Activated naive CD8-positive, alpha-beta T cell treated with anti-CD3 and anti-CD28 coated beads, Interleukin-2, amount 10 ng/mL, durations not matched to agents 7 days and 5 days (primary cell): ENCODE measurements at regions of chr11 and their contacts with region 1.

Region 1: GRCh38 chr11:64996710-64997380 is at the start of gene BATF2:
- DNase-seq: peak; percentile 43
- ATAC-seq: peak; percentile 72
- H3K4me3 Mint-ChIP-seq: peak within 1 kb of the TSS; percentile 79
- H3K27ac Mint-ChIP-seq: peak within 1 kb of the TSS; percentile 85
- H3K4me1 Mint-ChIP-seq: peaks cover 29% of the 10 kb centered on the region
- H3K27me3 Mint-ChIP-seq: no peaks in the 10 kb centered on the region
- total RNA-seq, gene BATF2: 1.2 TPM

Region 2: DNA sequence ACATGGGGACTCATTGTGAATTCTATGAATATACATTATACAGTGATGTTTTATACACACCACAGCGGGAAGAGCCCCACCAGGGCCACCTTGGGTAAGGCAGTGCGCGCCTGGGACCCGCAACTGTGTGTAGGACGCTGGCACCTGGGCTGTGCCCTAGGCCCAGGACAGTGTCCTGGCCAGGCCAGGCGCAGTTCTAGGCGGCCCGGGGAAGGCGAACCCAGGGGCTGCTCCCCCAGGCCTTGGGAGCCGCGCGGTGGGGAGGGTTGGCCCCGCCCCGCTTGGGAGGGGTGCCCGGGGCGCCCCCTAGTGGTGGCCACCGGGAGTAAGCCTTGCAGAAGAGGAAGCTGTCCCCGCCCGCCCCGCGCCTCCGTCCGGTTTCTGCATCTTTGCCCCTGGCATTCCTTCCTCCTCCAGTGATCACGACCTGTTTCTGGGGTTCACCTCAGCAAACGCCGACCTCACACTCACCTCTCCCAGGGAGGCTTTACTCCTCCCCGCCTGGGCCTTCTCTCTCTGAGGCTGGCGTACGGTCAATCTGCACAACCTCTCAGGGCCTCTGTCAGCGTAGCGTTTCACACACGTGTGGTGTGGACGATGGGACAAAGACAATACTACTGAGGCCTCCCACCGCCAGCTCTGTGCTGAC is 109.0 kb before region 1 on chr11:
- POLR2A ChIA-PET with region 1: no interaction called
- DNase-seq: peak; percentile 96
- ATAC-seq: peak; percentile 86
- H3K4me3 Mint-ChIP-seq: peak overlapping the region; percentile 83
- H3K27ac Mint-ChIP-seq: peak overlapping the region; percentile 78
- H3K4me1 Mint-ChIP-seq: peaks cover 19% of the 10 kb centered on the region
- H3K27me3 Mint-ChIP-seq: no peaks in the 10 kb centered on the region

Region 3: DNA sequence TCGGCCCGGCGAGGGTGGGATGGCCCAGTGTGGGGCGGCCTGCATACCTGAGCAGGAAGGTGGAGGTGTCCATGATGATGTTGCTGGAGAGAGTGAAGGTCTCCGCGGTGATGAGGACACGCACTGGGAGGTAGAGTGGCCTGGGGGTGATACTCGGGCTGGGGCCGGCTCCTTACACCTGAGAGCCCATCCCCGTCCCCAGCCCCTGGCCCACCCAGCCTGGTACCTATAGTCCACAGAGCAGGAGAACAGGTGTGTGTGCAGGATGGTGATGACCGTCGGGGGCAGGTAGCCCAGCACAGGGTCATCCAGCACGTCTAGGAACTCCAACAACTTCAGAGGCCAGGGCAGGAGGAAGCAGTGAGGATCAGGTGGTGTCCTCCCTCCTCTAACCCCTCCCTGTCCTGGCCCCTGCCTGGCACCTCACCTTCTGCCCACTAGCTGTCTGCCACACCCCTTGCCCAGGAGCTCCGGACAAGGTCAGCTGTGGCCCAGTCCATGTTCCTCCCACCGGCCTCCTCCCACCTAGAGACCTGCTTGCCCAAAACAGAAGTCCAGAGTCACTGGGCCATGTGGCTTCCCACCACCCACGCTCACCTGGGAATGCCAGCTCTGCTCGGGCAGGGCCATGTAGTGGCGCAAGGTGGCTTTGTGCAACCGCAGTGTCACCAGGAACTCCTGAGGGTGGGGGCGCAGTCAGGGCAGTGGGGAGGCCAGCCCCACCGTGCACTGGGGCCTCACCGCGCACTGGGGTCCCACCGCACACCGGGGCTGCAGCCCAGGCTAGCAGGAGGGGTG is 91.1 kb before region 1 on chr11:
- POLR2A ChIA-PET with region 1: no interaction called
- DNase-seq: no peak
- ATAC-seq: no peak
- H3K4me3 Mint-ChIP-seq: no peak overlapping the region
- H3K27ac Mint-ChIP-seq: no peak overlapping the region
- H3K4me1 Mint-ChIP-seq: no peaks in the 10 kb centered on the region
- H3K27me3 Mint-ChIP-seq: no peaks in the 10 kb centered on the region

Region 4: GRCh38 chr11:64924102-64924851 is 72.6 kb before region 1 on chr11 and contains the start of gene PPP2R5B:
- POLR2A ChIA-PET with region 1: interaction called, 10 read pairs
- DNase-seq: peak; percentile 90
- ATAC-seq: peak; percentile 93
- H3K4me3 Mint-ChIP-seq: peak within 1 kb of the TSS; percentile 97
- H3K27ac Mint-ChIP-seq: peak within 1 kb of the TSS; percentile 100
- H3K4me1 Mint-ChIP-seq: peaks cover 11% of the 10 kb centered on the region
- H3K27me3 Mint-ChIP-seq: no peaks in the 10 kb centered on the region
- total RNA-seq, gene PPP2R5B: 18.6 to 22.3 TPM

Region 5: DNA sequence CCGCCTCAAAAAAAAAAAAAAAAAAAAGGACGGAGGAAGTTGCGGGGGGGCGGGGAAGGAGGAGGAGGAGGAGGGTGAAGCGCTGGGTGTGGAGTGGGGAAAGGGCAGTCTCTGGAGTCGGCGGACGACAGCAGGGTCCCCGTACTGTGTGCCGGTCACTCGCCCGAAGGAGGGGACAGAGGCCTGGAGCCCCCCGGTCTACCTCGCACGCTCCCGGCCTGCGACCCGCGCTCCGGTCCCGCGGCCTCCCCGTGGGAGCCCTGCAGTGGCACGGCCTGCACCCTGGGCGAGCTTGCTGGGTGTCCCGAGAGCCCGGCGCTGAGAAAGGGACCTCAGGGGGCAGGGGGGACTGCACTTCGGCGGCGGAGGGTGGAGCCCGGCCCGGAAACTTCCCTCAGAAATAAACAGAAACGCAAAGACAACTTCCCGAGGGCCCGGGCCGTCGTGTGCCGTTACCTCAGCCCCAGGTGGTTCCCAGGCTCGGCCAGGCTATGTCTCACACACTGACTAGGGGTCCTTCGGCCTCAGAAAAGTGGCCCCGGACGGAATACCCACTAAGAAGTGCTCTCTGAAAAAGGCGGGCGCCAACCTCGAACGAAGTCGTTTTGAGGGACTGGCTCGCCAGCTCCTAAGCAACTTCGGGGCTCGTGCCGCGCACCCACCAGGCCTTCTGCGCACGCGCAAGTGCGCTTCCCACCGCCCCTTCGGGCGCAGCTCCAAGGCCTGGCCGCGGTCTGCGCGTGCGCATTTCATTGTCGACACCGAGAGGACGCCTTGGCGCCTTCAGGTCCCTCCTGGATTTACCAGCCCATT is 25.2 kb before region 1 on chr11 and contains the start of gene MAJIN:
- POLR2A ChIA-PET with region 1: no interaction called
- DNase-seq: peak; percentile 90
- ATAC-seq: peak; percentile 90
- H3K4me3 Mint-ChIP-seq: peak within 1 kb of the TSS; percentile 66
- H3K27ac Mint-ChIP-seq: peak within 1 kb of the TSS; percentile 58
- H3K4me1 Mint-ChIP-seq: peaks cover 14% of the 10 kb centered on the region
- H3K27me3 Mint-ChIP-seq: peaks cover 5% of the 10 kb centered on the region
- total RNA-seq, gene MAJIN: not detected

Region 6: DNA sequence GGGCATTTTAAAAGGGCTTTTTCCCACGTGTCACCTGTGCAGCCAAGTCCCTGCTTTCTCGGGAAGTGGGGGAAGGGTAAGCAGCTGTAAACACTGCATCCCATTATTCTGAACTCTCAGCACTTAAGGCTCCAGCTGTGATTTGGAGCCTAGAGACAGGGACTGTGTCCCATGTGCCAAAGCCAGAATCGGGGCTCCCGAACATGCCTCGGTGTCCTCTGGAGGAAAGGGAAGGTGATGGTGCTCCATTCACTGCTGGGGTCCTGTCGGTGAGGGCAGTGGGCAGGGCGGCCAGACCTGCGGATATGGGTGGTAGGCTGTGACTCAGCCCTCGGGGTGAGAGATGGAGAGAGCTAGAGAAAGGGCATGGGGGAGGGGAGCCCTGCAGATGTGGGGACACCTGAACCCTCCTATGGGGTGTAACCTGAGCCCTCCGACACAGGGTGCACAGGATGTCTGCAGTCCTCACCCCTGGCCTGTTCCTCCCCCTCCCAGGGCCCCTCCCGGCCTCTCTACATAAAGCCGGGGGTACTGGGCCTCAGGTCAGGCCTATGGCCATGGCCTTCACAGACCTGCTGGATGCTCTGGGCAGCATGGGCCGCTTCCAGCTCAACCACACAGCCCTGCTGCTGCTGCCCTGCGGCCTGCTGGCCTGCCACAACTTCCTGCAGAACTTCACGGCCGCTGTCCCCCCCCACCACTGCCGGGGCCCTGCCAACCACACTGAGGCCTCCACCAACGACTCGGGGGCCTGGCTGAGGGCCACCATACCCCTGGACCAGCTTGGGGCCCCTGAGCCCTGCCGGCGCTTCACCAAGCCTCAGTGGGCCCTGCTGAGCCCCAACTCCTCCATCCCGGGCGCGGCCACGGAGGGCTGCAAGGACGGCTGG is 216.7 kb after region 1 on chr11:
- POLR2A ChIA-PET with region 1: no interaction called
- DNase-seq: no peak
- ATAC-seq: peak; percentile 75
- H3K4me3 Mint-ChIP-seq: peak overlapping the region; percentile 28
- H3K27ac Mint-ChIP-seq: peak overlapping the region; percentile 48
- H3K4me1 Mint-ChIP-seq: peaks cover 20% of the 10 kb centered on the region
- H3K27me3 Mint-ChIP-seq: no peaks in the 10 kb centered on the region